IMR-90 (cell line): ENCODE measurements at regions of chr14 and their contacts with region 1.

Region 1: GRCh38 chr14:75293920-75294642 is 15.5 kb downstream of the FOS start:
- DNase-seq: peak; percentile 95
- ATAC-seq: peak; percentile 96
- H3K4me3 ChIP-seq: peak overlapping the region; percentile 90
- H3K27ac ChIP-seq: peak overlapping the region; percentile 87
- H3K4me1 ChIP-seq: peaks cover 4% of the 10 kb centered on the region; the same call in 1 of the 2 replicates
- H3K27me3 ChIP-seq: peaks cover 3% of the 10 kb centered on the region; the same call in 1 of the 2 replicates
- CTCF ChIP-seq: no peak
- POLR2A ChIP-seq: peak; percentile 87
- RAD21 ChIP-seq: no peak

Region 2: DNA sequence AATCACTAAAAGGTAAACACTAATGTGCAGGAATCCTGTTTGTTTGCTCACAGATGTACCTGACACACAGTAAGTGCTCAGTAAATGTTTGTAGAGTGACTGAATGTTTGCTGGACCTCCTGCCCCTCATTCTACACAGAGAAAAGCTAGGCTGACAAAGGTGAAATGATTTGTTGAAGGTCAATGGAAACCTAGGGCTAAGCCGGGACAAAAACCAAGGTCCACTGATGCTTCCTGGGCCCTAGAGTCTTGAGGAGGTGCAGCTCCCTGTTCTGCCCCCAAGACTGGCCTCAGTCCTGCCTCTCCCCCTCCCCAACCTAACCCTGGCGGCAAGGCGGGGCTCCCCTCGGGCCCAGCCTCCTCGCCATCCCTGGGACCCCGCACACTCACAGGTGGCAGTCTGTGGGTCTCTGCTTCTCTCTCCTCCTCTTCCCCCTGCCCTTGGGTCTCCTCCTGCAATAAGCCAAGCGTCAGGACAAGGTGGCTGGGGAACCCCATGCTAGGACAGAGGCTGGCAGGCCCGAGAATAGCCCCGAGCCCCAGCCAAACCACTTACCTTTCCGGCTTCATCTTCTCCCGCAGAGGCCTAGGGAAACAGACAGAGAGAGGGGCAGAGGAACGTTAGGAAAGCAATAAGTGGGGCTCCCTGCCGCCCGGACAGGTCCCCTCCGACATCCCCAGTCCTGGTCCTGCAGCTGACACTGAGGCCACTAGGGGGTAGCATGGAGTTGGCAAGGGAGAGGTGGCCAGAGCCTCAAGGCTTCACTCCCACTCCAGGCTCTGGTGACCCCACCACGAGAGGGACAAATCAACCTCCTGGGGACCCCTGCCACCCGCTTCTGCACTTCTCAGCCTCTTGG is 348.0 kb before region 1 on chr14:
- CTCF ChIA-PET with region 1: no interaction called
- POLR2A ChIA-PET with region 1: no interaction called
- dilution Hi-C with region 1: no loop called
- in situ Hi-C with region 1: no loop called
- intact Hi-C with region 1: loop called (anchors 10 kb)
- DNase-seq: peak; percentile 59
- ATAC-seq: peak; percentile 90
- H3K4me3 ChIP-seq: no peak overlapping the region
- H3K27ac ChIP-seq: no peak overlapping the region
- H3K4me1 ChIP-seq: peaks cover 13% of the 10 kb centered on the region
- H3K27me3 ChIP-seq: no peaks in the 10 kb centered on the region
- CTCF ChIP-seq: peak; percentile 90
- POLR2A ChIP-seq: peak; percentile 38; the same call in 1 of the 2 replicates
- RAD21 ChIP-seq: peak; percentile 84

Region 3: DNA sequence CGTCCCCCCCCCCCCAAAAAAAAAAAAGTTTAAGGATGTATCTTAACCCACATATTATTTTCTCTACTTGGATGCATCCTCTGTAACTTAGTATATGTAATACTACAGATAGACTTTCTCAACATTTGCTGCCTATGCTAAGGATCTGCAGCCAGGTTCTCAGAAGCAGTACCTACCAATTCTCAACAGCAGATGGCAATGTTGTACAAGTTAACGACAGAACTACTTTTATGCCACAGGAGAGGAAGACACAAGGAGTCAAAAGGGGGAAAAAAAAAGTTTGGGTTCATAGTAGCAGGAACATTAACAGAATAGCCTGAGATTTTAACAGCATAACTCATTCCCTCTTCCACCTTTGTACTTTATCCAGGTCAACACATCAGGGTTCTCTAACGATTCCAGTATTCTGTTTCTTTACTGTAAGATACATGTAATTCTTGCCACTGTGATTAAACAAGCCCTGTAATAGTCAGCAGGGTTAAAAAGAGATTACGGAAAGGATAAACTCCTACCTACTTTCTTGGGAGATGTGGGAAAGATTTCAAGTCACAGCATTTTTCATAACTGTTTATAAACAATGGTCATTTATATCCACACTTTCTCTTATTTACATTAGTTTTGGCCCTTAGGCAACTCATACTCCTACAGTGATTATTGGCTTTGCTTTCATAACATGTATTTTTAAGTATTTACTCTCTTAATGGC is 161.5 kb before region 1 on chr14:
- CTCF ChIA-PET with region 1: interaction called, 5 read pairs
- POLR2A ChIA-PET with region 1: no interaction called
- dilution Hi-C with region 1: no loop called
- in situ Hi-C with region 1: no loop called
- intact Hi-C with region 1: loop called (anchors 1 kb)
- DNase-seq: peak; percentile 74
- ATAC-seq: peak; percentile 95
- H3K4me3 ChIP-seq: no peak overlapping the region
- H3K27ac ChIP-seq: no peak overlapping the region
- H3K4me1 ChIP-seq: no peaks in the 10 kb centered on the region
- H3K27me3 ChIP-seq: no peaks in the 10 kb centered on the region
- CTCF ChIP-seq: peak; percentile 81
- POLR2A ChIP-seq: 0 out of 2 replicates have a peak, but pooled peaks have one; percentile 39
- RAD21 ChIP-seq: peak; percentile 89

Region 4: GRCh38 chr14:75258615-75259466 is 35.2 kb before region 1 on chr14:
- CTCF ChIA-PET with region 1: no interaction called
- POLR2A ChIA-PET with region 1: no interaction called
- dilution Hi-C with region 1: no loop called
- in situ Hi-C with region 1: no loop called
- intact Hi-C with region 1: loop called (anchors 1 kb)
- DNase-seq: peak; percentile 100
- ATAC-seq: peak; percentile 99
- H3K4me3 ChIP-seq: peak overlapping the region; percentile 53
- H3K27ac ChIP-seq: peak overlapping the region; percentile 82
- H3K4me1 ChIP-seq: peaks cover 8% of the 10 kb centered on the region
- H3K27me3 ChIP-seq: no peaks in the 10 kb centered on the region
- CTCF ChIP-seq: no peak
- POLR2A ChIP-seq: peak; percentile 71; the same call in 1 of the 2 replicates
- RAD21 ChIP-seq: no peak

Region 5: DNA sequence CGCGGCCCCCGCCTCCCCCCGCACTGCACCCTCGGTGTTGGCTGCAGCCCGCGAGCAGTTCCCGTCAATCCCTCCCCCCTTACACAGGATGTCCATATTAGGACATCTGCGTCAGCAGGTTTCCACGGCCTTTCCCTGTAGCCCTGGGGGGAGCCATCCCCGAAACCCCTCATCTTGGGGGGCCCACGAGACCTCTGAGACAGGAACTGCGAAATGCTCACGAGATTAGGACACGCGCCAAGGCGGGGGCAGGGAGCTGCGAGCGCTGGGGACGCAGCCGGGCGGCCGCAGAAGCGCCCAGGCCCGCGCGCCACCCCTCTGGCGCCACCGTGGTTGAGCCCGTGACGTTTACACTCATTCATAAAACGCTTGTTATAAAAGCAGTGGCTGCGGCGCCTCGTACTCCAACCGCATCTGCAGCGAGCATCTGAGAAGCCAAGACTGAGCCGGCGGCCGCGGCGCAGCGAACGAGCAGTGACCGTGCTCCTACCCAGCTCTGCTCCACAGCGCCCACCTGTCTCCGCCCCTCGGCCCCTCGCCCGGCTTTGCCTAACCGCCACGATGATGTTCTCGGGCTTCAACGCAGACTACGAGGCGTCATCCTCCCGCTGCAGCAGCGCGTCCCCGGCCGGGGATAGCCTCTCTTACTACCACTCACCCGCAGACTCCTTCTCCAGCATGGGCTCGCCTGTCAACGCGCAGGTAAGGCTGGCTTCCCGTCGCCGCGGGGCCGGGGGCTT is 15.5 kb before region 1 on chr14 and contains the start of gene FOS:
- CTCF ChIA-PET with region 1: interaction called, 3 read pairs
- POLR2A ChIA-PET with region 1: interaction called, 4 read pairs
- dilution Hi-C with region 1: no loop called
- in situ Hi-C with region 1: no loop called
- intact Hi-C with region 1: loop called (anchors 2 kb)
- DNase-seq: peak; percentile 96
- ATAC-seq: peak; percentile 77
- H3K4me3 ChIP-seq: peak within 1 kb of the TSS; percentile 83
- H3K27ac ChIP-seq: peak within 1 kb of the TSS; percentile 90
- H3K4me1 ChIP-seq: peaks cover 13% of the 10 kb centered on the region
- H3K27me3 ChIP-seq: no peaks in the 10 kb centered on the region
- CTCF ChIP-seq: no peak
- POLR2A ChIP-seq: peak; percentile 99
- RAD21 ChIP-seq: peak; percentile 21; the same call in 1 of the 2 replicates
- total RNA-seq, gene FOS: 53.6 and 86.7 TPM in 2 replicates

Region 6: GRCh38 chr14:75871181-75871880 is 577.2 kb after region 1 on chr14:
- CTCF ChIA-PET with region 1: no interaction called
- POLR2A ChIA-PET with region 1: no interaction called
- dilution Hi-C with region 1: no loop called
- in situ Hi-C with region 1: no loop called
- intact Hi-C with region 1: no loop called
- DNase-seq: peak; percentile 58
- ATAC-seq: peak; percentile 38
- H3K4me3 ChIP-seq: no peak overlapping the region
- H3K27ac ChIP-seq: no peak overlapping the region; the same call in 1 of the 2 replicates
- H3K4me1 ChIP-seq: peaks cover 19% of the 10 kb centered on the region
- H3K27me3 ChIP-seq: no peaks in the 10 kb centered on the region
- CTCF ChIP-seq: no peak
- POLR2A ChIP-seq: no peak
- RAD21 ChIP-seq: no peak

Region 7: DNA sequence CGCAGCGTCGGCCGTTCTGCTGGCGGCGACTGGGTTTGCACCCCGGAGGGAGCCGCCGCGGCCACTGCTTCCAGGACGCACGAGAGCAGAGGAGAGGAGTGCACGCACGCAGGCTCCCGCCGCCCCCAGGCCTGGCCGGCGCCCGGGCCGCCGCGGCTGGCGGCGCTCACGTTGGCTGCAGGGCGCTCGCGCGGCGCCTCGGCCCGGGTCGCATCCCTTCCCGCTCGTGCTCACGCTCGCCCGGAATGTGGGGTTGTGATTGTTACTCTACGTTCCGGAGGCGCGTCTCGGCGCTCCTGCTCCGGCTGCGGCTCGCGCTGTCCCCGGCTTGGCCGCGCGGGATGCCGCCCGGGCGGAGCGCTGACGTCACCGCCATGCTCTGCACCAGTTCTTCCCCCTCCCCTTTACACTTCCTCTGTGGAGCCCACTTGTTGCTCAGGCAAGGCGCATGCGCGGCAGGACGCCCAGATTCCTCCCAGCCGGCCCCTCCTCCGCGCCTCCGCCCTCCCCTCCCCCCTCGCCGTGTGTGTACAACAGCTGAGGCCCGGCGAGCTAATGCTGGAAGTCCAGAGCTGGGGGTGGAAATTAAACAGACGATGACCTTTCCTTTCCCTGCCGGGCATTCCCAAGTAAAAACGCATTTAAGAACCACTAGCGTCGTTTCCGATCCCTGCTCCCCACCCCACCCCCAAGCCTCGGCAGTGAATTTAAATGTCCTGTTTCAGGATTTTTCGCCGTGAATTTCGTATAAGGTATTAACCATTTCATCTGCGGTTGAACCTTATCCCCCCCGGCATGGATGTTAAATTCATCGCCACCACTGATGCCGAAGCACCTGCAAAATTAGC is 1734.5 kb after region 1 on chr14 and contains the start of gene IRF2BPL:
- CTCF ChIA-PET with region 1: no interaction called
- POLR2A ChIA-PET with region 1: no interaction called
- dilution Hi-C with region 1: no loop called
- in situ Hi-C with region 1: loop called (anchors 25 kb)
- intact Hi-C with region 1: no loop called
- DNase-seq: peak; percentile 99
- ATAC-seq: peak; percentile 63
- H3K4me3 ChIP-seq: peak within 1 kb of the TSS; percentile 97
- H3K27ac ChIP-seq: peak within 1 kb of the TSS; percentile 99
- H3K4me1 ChIP-seq: peaks cover 13% of the 10 kb centered on the region
- H3K27me3 ChIP-seq: no peaks in the 10 kb centered on the region
- CTCF ChIP-seq: no peak
- POLR2A ChIP-seq: peak; percentile 80
- RAD21 ChIP-seq: peak; percentile 15; the same call in 1 of the 2 replicates
- total RNA-seq, gene IRF2BPL: 6.3 and 8.9 TPM in 2 replicates